ENCODE measurements at regions of chr2 and their contacts with region 1.

Region 1: DNA sequence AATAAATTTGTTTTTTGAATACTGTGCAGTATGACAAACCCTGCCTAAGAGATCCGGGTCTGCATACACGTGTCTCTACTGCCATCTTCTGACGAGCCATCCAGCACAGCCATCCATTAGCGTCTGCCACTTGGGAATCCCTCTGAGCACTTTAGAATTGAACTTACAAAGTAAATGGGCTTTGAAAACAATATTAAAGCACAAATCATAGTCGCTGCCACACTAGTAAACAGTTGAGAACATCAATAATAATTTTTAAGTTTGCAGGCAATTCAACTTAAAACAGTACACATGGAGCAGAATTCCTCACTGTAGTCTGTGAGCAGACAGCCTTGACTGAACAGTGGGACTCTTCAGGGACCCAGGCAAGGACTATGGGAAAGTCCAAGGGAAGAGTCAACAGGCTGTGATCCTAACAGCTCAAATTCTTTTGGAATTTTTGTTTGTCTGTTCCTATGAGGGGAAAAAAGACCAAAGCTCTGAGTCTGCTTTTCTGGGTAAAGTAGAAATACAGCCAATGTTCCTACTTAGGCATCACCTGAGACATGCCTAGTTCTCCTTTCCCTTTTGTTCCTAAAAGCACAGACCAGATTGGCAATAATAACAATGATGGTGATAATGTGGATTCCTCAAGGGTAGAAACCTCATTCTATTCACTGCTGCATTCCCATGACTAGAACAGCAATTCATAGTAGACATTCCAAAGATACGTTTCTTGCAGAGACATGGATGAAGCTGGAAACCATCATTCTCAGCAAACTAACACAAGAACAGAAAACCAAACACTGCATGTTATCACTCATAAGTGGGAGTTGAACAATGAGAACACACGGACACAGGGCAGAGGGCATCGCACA is 92.9 kb downstream of the MREG start:
- DNase-seq: peak; percentile 65
- ATAC-seq: peak; percentile 98
- H3K4me3 ChIP-seq: no peak overlapping the region
- H3K27ac ChIP-seq: no peak overlapping the region
- H3K4me1 ChIP-seq: peaks cover 5% of the 10 kb centered on the region in 2 experiments; a peak in 3 of 4 replicates
- H3K27me3 ChIP-seq: no peaks in the 10 kb centered on the region
- CTCF ChIP-seq: peak; percentile 62 to 92 (median 73)
- POLR2A ChIP-seq: no peak
- RAD21 ChIP-seq: peak; percentile 94

Region 2: GRCh38 chr2:214069265-214069664 is 1851.2 kb before region 1 on chr2:
- CTCF ChIA-PET with region 1: no interaction called
- POLR2A ChIA-PET with region 1: no interaction called
- RAD21 ChIA-PET with region 1: no interaction called
- intact Hi-C with region 1: loop called (anchors 10 kb)
- DNase-seq: peak; percentile 83
- ATAC-seq: peak; percentile 99
- H3K4me3 ChIP-seq: peak overlapping the region in 1 of 2 experiments; percentile 7; a peak in 1 of 4 replicates
- H3K27ac ChIP-seq: no peak overlapping the region
- H3K4me1 ChIP-seq: peaks cover 3 to 15% of the 10 kb centered on the region in 2 experiments; a peak in 2 of 4 replicates
- H3K27me3 ChIP-seq: no peaks in the 10 kb centered on the region
- CTCF ChIP-seq: no peak
- POLR2A ChIP-seq: no peak
- RAD21 ChIP-seq: 0 out of 2 replicates have a peak, but pooled peaks have one; percentile 20

Region 3: GRCh38 chr2:214960677-214961076 is 959.8 kb before region 1 on chr2:
- CTCF ChIA-PET with region 1: interaction called, 3 read pairs
- POLR2A ChIA-PET with region 1: no interaction called
- RAD21 ChIA-PET with region 1: no interaction called
- intact Hi-C with region 1: loop called (anchors 5 kb)
- DNase-seq: no peak
- ATAC-seq: no peak
- H3K4me3 ChIP-seq: no peak overlapping the region
- H3K27ac ChIP-seq: no peak overlapping the region
- H3K4me1 ChIP-seq: no peaks in the 10 kb centered on the region
- H3K27me3 ChIP-seq: no peaks in the 10 kb centered on the region
- CTCF ChIP-seq: peak in 2 of 3 experiments; percentile 32 to 46; a peak in 3 of 6 replicates
- POLR2A ChIP-seq: no peak
- RAD21 ChIP-seq: peak; percentile 65

Region 4: DNA sequence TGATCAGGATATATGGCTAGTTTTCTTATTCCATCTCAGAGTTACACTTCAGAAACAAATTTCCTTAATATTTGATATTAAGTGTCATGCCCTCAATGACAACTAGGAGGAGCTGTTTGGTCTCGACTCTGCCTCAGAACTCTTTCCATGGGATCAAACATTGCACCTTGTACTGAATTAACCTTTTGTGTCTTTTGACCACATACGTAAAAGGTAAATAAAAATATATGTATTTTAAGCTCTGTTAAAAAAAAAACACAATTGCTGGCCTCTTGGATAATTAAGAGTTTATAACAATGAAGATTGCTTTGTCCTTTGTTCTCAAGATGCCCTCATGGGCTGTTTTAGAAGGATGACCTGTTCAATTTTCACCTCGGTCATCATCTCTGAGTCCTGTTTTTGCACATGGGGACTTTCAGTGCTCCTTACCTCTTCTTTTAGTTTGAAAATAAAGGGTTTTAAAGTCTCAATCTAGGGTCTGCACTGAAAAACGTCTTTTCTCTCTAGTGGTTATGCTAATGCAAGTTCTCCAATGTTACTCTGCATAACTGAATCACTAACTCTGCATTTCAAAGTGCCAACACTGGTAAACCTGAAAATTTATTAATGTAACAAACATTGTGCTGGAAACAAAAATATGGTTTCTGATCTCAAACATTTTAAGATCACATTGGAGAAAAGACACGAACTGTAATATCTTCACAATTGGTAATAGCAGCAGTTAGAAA is 465.8 kb before region 1 on chr2:
- CTCF ChIA-PET with region 1: no interaction called
- POLR2A ChIA-PET with region 1: no interaction called
- RAD21 ChIA-PET with region 1: no interaction called
- intact Hi-C with region 1: loop called (anchors 10 kb)
- DNase-seq: peak; percentile 12
- ATAC-seq: peak; percentile 64; the same call in 1 of the 2 replicates
- H3K4me3 ChIP-seq: no peak overlapping the region
- H3K27ac ChIP-seq: no peak overlapping the region
- H3K4me1 ChIP-seq: no peaks in the 10 kb centered on the region
- H3K27me3 ChIP-seq: no peaks in the 10 kb centered on the region
- CTCF ChIP-seq: peak; percentile 64 to 75 (median 72); a peak in 5 of 6 replicates
- POLR2A ChIP-seq: no peak
- RAD21 ChIP-seq: peak; percentile 84

Region 5: DNA sequence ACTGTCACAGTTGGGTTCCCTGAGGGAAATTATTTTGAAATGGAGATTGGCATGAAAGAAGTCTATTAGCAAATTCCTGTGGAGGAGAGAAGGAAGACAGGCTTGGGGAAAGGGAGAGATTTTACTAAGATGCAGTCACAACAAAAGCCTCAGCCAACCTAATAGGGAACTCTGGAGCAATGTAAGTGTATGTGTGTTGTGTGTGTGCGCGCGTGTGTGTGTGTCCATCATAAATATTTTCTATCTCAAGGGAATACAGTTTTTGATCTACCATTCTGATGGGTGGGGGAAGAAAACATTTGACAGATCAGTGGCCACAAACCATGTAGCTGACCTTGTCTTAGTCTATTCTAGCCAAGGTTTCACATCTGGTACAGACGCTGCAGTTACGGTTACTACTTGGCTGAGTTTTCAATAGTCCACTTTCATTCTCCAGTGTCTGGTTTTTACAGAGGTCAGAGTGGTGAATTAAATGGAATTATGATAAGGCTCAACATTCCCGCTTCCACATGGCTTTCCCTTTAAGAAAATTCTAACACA is 20.2 kb after region 1 on chr2:
- CTCF ChIA-PET with region 1: no interaction called
- POLR2A ChIA-PET with region 1: no interaction called
- RAD21 ChIA-PET with region 1: no interaction called
- intact Hi-C with region 1: no loop called
- DNase-seq: no peak
- ATAC-seq: no peak
- H3K4me3 ChIP-seq: no peak overlapping the region
- H3K27ac ChIP-seq: no peak overlapping the region
- H3K4me1 ChIP-seq: peaks cover 2 to 8% of the 10 kb centered on the region in 2 experiments; a peak in 3 of 4 replicates
- H3K27me3 ChIP-seq: no peaks in the 10 kb centered on the region
- CTCF ChIP-seq: no peak
- POLR2A ChIP-seq: no peak
- RAD21 ChIP-seq: no peak

Measured in HCT116 (cell line).